ENCODE measurements at regions of chr11 and their contacts with region 1.

Region 1: GRCh38 chr11:125404776-125405435 is 91.2 kb downstream of the FEZ1 start:
- DNase-seq: peak; percentile 68 to 80
- ATAC-seq: peak; percentile 40 to 50
- H3K4me3 ChIP-seq: peak overlapping the region; percentile 19 to 42 (median 26)
- H3K27ac ChIP-seq: peak overlapping the region; percentile 90 to 96 (median 93)
- H3K4me1 ChIP-seq: peaks cover 56 to 64% of the 10 kb centered on the region in 2 donors
- H3K27me3 ChIP-seq: no peaks in the 10 kb centered on the region
- CTCF ChIP-seq: peak; percentile 92 to 99 (median 98)
- POLR2A ChIP-seq: no peak

Region 2: DNA sequence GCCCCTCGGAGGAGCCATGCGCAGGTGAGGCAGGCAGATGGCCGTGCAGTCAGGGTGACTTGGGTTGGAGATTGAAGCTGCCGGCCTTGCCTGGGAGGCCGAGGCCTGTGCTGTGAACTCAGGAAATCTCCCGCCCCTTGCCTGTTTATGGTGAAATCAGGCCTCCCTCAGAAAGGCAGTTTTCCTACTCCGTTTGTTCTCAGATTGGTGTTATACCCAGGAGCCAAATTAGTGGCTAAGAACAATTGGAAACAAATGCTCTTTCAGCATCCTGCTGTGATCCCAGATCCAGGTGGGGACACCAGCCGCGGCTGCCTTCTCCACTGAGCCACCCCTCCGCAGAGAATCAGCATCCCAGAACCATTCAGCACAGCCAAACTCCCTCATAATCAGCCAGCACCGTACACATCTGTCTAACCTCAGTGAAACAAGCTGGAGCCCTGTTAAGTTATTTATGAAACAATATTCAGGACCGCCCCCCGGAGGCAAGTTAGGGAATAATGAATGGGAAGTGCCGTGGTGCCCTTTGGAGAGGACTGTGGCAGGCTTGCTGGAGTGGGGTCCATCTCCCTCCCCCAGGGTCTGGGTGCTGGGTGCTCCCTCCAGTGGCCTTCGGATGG is 180.4 kb before region 1 on chr11:
- in situ Hi-C with region 1: no loop called
- intact Hi-C with region 1: loop called (anchors 2 kb)
- DNase-seq: no peak
- ATAC-seq: no peak
- H3K4me3 ChIP-seq: no peak overlapping the region
- H3K27ac ChIP-seq: peak overlapping the region; percentile 56 to 75 (median 70)
- H3K4me1 ChIP-seq: peaks cover 40 to 46% of the 10 kb centered on the region in 2 donors
- H3K27me3 ChIP-seq: no peaks in the 10 kb centered on the region
- CTCF ChIP-seq: peak in 2 of 5 experiments; percentile 11 to 16
- POLR2A ChIP-seq: no peak

Region 3: GRCh38 chr11:125270711-125271110 is 134.2 kb before region 1 on chr11:
- in situ Hi-C with region 1: no loop called
- intact Hi-C with region 1: no loop called
- DNase-seq: no peak
- ATAC-seq: no peak
- H3K4me3 ChIP-seq: no peak overlapping the region
- H3K27ac ChIP-seq: no peak overlapping the region
- H3K4me1 ChIP-seq: no peaks in the 10 kb centered on the region
- H3K27me3 ChIP-seq: no peaks in the 10 kb centered on the region
- CTCF ChIP-seq: no peak
- POLR2A ChIP-seq: no peak

Region 4: GRCh38 chr11:125281831-125282595 is 122.9 kb before region 1 on chr11:
- in situ Hi-C with region 1: no loop called
- intact Hi-C with region 1: loop called (anchors 5 kb)
- DNase-seq: no peak
- ATAC-seq: peak; percentile 15 to 36
- H3K4me3 ChIP-seq: no peak overlapping the region
- H3K27ac ChIP-seq: peak overlapping the region in 3 of 4 donors; percentile 29 to 61 (median 49)
- H3K4me1 ChIP-seq: peaks cover 32 to 33% of the 10 kb centered on the region in 2 donors
- H3K27me3 ChIP-seq: no peaks in the 10 kb centered on the region
- CTCF ChIP-seq: no peak
- POLR2A ChIP-seq: no peak

Region 5: DNA sequence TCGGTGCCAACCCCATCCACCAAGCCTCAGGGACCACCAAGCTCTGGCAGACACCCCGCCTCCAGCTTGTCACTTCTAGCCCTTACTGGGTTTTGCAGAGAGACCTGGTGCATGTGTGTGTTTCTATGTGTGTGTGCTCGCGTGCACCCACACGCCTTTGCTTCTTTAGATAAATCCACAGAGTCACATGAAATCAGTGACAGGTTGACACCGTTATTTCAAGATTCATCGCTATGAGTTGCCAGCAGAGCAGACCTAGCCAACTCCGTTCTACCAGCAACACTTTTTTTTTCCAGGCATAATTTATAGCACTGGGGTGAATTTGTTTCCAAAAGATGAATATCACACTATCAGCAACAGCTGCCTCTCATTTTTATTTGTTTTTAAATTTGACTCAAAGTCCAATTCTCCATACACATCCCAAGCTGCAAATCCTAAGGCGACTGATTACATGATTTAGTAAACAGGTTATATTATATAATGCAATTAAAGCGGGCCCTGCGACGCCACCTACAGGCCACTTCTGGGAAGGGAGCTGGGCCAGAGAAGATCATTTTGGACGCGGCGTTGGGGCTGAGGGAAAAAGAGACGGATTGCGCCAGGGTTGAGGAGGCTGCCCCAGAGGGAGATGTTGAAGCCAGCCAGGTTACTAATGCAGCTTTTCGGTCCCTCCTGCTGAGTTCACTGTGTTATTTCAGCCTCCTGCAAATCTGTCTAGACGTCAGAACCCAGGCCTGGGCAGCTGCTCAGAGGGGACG is 59.3 kb before region 1 on chr11:
- in situ Hi-C with region 1: no loop called
- intact Hi-C with region 1: loop called (anchors 1 kb)
- DNase-seq: peak; percentile 71 to 89
- ATAC-seq: peak; percentile 83 to 93
- H3K4me3 ChIP-seq: no peak overlapping the region
- H3K27ac ChIP-seq: peak overlapping the region; percentile 68 to 85 (median 72)
- H3K4me1 ChIP-seq: peaks cover 24 to 29% of the 10 kb centered on the region in 2 donors
- H3K27me3 ChIP-seq: no peaks in the 10 kb centered on the region
- CTCF ChIP-seq: peak; percentile 90 to 94 (median 91)
- POLR2A ChIP-seq: no peak

Region 6: DNA sequence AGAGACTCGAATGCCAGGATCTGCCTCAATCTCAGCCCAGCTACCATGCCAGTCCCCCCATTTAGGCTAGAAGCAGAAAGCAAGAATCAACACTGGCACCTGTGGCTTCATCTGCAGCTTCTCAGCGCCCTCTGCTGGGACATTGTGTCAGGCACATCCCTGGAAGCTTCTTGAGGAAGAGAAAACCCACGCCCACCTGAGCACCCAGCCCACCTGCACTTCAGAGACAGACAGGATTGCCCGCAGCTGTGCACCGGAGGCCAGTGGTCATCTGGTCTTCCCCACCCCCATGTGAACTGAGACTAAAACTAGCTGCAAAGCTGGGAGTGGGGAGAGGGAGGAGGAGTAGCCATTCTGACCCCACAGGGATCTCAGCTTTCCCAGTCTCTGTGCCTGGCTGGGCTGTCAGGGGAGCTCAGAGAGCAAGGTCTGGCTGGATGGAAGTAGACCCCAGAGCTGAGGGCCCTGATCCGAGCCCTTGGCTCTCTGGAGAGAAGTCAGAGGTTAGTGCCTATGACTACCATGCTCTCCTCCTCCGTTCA is 24.3 kb after region 1 on chr11:
- in situ Hi-C with region 1: no loop called
- intact Hi-C with region 1: loop called (anchors 1 kb)
- DNase-seq: peak; percentile 42 to 72
- ATAC-seq: peak in 1 of 2 donors; percentile 16
- H3K4me3 ChIP-seq: no peak overlapping the region
- H3K27ac ChIP-seq: peak overlapping the region; percentile 24 to 49 (median 39)
- H3K4me1 ChIP-seq: peaks cover 63 to 69% of the 10 kb centered on the region in 2 donors
- H3K27me3 ChIP-seq: no peaks in the 10 kb centered on the region
- CTCF ChIP-seq: peak; percentile 67 to 81 (median 74)
- POLR2A ChIP-seq: no peak

Measured in gastrocnemius medialis (tissue), 4 donors.